Activated CD4-positive, alpha-beta memory T cell treated with anti-CD3 and anti-CD28 coated beads for 36 hours (primary cell): ENCODE measurements at regions of chr4 and their contacts with region 1.

Region 1: GRCh38 chr4:124111922-124112321 is 600.6 kb downstream of the ANKRD50 start:
- DNase-seq: no peak
- H3K4me3 Mint-ChIP-seq: no peak overlapping the region
- H3K27ac Mint-ChIP-seq: no peak overlapping the region
- H3K4me1 Mint-ChIP-seq: no peaks in the 10 kb centered on the region
- H3K27me3 Mint-ChIP-seq: no peaks in the 10 kb centered on the region

Region 2: GRCh38 chr4:123770884-123771283 is 341.0 kb before region 1 on chr4:
- CTCF ChIA-PET with region 1: no interaction called
- POLR2A ChIA-PET with region 1: no interaction called
- intact Hi-C with region 1: loop called (anchors 5 kb)
- DNase-seq: no peak
- H3K4me3 Mint-ChIP-seq: no peak overlapping the region
- H3K27ac Mint-ChIP-seq: no peak overlapping the region
- H3K4me1 Mint-ChIP-seq: no peaks in the 10 kb centered on the region
- H3K27me3 Mint-ChIP-seq: no peaks in the 10 kb centered on the region